Dendritic cell treated with granulocyte-macrophage colony-stimulating factor and Interleukin-4, amounts not matched to agents 40 ng/mL and 50 ng/mL, for 4 days (primary cell): ENCODE measurements at regions of chr3 and their contacts with region 1.

Region 1: DNA sequence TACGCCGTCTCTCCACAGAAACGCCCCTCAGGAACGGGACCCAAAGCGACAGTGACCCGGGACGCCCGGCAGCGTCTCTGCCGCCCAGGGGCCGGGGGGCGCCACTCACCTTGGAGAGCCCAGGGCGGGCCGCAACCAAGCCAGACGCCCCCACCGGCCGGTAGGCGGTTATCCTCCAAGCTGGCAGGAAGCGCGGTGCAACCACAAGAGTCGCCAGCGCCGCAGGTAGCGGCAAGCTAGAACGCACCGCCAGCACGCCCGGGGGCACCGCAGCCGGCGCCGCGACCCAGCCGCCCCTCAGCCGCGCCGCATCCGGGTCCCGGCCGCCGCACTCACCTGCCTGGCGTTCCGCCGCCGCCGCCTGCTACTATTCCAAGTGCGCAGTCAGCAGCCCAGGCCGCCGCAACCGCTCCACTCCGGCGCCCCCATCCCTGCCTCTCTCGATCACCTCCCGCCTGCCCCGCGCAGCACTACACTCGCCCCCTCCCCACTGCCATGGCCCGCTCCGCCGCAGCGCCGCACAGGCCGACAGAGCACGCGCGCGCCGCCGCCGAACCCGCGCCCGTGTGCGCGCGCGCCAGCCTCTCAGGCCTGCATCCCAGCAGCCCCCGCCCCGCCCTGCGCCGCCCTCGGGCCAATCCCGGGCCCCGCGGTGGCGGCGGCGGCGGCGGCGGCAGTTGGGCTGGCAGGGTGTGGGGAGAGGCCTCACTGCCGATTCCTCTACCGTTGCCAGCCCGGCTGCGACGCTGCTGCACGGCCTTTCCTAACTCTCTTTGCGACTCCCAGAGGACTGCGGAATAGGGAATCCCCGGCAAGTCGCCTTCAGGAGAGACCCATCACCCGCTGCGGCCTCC is at the start of gene PIK3CB:
- H3K4me3 Mint-ChIP-seq: peak within 1 kb of the TSS; percentile 88
- H3K27ac Mint-ChIP-seq: peak within 1 kb of the TSS; percentile 99
- H3K4me1 Mint-ChIP-seq: peaks cover 33% of the 10 kb centered on the region
- H3K27me3 Mint-ChIP-seq: no peaks in the 10 kb centered on the region

Region 2: GRCh38 chr3:138705675-138706074 is 128.9 kb before region 1 on chr3:
- intact Hi-C with region 1: loop called (anchors 10 kb)
- H3K4me3 Mint-ChIP-seq: no peak overlapping the region
- H3K27ac Mint-ChIP-seq: no peak overlapping the region
- H3K4me1 Mint-ChIP-seq: no peaks in the 10 kb centered on the region
- H3K27me3 Mint-ChIP-seq: no peaks in the 10 kb centered on the region

Region 3: GRCh38 chr3:138786788-138787278 is 47.8 kb before region 1 on chr3:
- intact Hi-C with region 1: loop called (anchors 5 kb)
- H3K4me3 Mint-ChIP-seq: peak overlapping the region; percentile 83
- H3K27ac Mint-ChIP-seq: peak overlapping the region; percentile 91
- H3K4me1 Mint-ChIP-seq: peaks cover 25% of the 10 kb centered on the region
- H3K27me3 Mint-ChIP-seq: no peaks in the 10 kb centered on the region

Region 4: GRCh38 chr3:138890555-138891187 is 56.1 kb after region 1 on chr3:
- intact Hi-C with region 1: loop called (anchors 2 kb)
- H3K4me3 Mint-ChIP-seq: no peak overlapping the region
- H3K27ac Mint-ChIP-seq: peak overlapping the region; percentile 92
- H3K4me1 Mint-ChIP-seq: peaks cover 34% of the 10 kb centered on the region
- H3K27me3 Mint-ChIP-seq: no peaks in the 10 kb centered on the region

Region 5: GRCh38 chr3:138915503-138916498 is 81.2 kb after region 1 on chr3:
- intact Hi-C with region 1: loop called (anchors 1 kb)
- H3K4me3 Mint-ChIP-seq: peak overlapping the region; percentile 92
- H3K27ac Mint-ChIP-seq: peak overlapping the region; percentile 98
- H3K4me1 Mint-ChIP-seq: peaks cover 12% of the 10 kb centered on the region
- H3K27me3 Mint-ChIP-seq: peaks cover 2% of the 10 kb centered on the region